ENCODE measurements at regions of chr7 and their contacts with region 1.

Region 1: DNA sequence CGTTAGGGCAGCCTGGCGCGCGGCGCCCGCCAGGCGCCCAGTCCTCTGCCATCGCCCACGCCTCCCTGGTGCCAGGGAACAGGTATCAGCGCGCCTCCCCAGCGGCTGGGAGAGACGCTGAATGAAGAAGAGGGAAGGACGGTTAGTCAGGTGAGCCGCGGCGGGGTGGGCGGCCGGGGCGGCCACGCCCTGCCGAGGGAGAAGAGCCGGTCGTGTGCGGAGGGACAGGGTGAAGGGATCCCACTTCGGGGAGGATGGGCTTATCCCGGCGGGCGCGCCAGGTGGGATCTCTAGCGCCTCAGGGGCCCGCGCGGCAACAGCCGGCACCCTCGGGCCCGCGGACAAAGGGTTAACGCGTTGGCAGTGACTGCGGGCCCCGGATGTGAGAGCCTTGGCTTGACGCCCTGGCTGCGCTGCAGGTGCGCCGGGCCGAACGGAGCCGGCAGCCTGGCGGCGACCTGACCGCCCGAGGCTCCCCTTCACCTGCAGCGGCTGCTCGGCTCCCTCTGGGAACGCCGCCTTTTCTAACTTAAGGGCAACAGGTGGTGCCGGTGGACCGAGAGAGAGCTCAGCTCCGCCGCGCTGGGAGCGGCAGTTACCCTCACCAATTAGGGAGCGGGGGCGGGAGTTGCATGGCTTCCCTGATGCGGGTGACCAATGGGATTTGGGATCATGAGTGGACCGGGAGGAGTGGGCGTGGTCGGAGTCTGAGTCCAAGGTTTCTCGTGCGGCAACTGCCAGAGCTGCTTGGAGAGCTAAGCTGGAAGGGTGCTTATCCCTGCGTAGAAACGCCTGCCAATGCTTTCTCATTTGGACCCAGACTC is at the start of gene ARL4A:
- DNase-seq: peak; percentile 98
- ATAC-seq: peak; percentile 97
- total RNA-seq, gene ARL4A: 10.1 TPM

Region 2: GRCh38 chr7:12638851-12639467 is 48.1 kb before region 1 on chr7:
- intact Hi-C with region 1: loop called (anchors 5 kb)
- DNase-seq: no peak
- ATAC-seq: no peak

Region 3: GRCh38 chr7:12771378-12771877 is 84.3 kb after region 1 on chr7:
- intact Hi-C with region 1: loop called (anchors 2 kb)
- DNase-seq: no peak
- ATAC-seq: peak; percentile 87

Region 4: DNA sequence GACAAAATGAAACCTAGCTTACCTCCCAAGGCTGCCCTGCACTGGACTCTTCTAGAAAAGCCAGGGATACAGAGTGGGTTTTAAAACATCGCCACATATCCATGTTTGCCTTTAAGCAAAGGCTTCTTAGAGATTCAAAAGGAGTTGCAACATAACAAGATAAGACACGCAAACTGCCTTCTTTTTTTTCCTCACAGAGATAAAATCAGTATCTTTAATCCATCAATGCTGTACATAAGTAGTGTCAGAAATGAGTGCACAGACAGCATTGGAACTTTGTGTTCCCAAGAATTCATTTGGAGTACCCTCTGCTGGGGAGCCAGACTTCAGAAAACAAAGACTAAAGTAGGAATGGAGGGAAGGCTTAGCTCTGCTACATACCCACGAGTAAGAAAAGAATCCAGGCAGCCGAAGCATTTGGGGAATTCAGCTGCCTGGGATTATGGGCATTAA is 428.1 kb after region 1 on chr7:
- intact Hi-C with region 1: loop called (anchors 2 kb)
- DNase-seq: no peak
- ATAC-seq: no peak

Region 5: GRCh38 chr7:13262929-13263530 is 575.9 kb after region 1 on chr7:
- intact Hi-C with region 1: loop called (anchors 2 kb)
- DNase-seq: no peak
- ATAC-seq: no peak